Heart right ventricle (tissue), 16 donors: ENCODE measurements at regions of chr6 and their contacts with region 1.

Region 1: DNA sequence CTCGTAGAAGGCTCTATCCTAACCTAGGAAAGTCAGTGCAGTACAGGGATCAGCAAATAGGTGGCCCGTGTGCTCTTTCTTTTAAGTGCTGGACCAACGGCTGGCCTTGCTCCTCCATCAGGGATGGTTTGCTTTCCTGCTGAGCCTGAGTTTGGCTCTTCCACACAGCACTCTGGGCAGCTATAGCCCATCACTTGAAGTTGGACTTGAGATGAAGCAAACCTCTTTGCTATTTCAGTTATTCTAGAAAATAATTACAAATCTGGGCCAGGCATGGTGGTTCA is 66.9 kb upstream of the KCNK16 start:
- DNase-seq: no peak
- ATAC-seq: peak in 2 of 8 donors; percentile 39 to 53
- H3K4me3 ChIP-seq: no peak overlapping the region
- H3K27ac ChIP-seq: no peak overlapping the region
- H3K4me1 ChIP-seq: no peaks in the 10 kb centered on the region
- H3K27me3 ChIP-seq: peaks cover 0 to 4% (median 0%) of the 10 kb centered on the region in 7 donors
- CTCF ChIP-seq: peak in 6 of 9 donors; percentile 9 to 35 (median 28)

Region 2: DNA sequence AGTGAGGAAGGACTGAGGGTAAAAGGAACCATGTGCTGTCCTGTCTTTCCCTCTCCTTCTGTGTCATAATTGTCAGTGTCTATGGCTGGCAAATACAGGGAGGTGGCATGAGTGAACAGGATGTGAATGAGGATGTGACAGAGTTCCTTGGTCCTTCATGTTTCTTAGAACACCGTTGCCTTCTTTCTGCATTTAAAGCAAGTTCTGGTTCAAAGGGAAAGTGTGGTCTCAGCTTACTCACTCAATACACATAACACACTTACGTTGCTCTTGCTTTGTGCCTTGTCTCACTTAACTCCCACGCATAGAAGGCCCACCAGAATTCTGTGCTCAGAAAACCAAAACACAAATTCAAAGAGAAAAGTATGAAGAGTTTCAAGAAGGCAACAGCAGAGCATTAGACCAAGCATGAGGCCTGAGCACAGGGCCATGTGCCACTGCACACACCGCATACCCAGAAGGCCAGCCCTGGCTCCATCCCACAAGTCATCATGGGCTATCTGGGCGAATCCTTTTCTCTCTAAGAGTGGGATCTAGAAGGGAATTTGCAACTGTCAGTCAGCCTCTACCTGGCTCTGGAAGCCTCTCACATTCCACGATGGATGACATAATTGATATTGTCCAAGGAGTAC is 235.5 kb before region 1 on chr6:
- intact Hi-C with region 1: no loop called
- DNase-seq: no peak
- ATAC-seq: no peak
- H3K4me3 ChIP-seq: no peak overlapping the region
- H3K27ac ChIP-seq: no peak overlapping the region
- H3K4me1 ChIP-seq: peaks cover 0 to 12% (median 0%) of the 10 kb centered on the region in 9 donors
- H3K27me3 ChIP-seq: peaks cover 0 to 37% (median 14%) of the 10 kb centered on the region in 7 donors
- CTCF ChIP-seq: no peak

Region 3: GRCh38 chr6:39587080-39587479 is 197.7 kb after region 1 on chr6:
- intact Hi-C with region 1: loop called in 1 of 10 experiments (anchors 10 kb)
- DNase-seq: no peak
- ATAC-seq: no peak
- H3K4me3 ChIP-seq: no peak overlapping the region
- H3K27ac ChIP-seq: no peak overlapping the region
- H3K4me1 ChIP-seq: no peaks in the 10 kb centered on the region
- H3K27me3 ChIP-seq: peaks cover 0 to 10% (median 0%) of the 10 kb centered on the region in 7 donors
- CTCF ChIP-seq: no peak